Right ventricle myocardium superior (tissue), 1 donor: ENCODE measurements at regions of chr14 and their contacts with region 1.

Region 1: DNA sequence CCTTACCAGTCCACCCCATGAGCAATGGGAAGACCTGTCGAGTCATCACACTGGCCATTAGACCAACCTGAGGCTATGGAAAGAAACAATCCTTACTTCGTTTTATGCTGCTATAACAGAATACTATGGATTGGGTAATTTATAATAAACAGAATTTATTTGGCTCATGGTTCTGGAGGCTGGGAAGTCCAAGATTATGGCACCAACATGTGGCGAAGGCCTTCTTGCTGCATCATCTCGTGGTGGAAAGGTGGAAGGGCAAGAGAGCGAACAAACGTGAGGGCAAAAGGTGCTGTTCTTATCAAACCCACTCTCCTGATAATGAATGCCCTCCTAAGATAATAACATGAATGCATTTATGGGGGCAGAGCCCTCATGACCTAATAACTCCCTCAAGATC is 9.6 kb upstream of the SPTB start:
- DNase-seq: no peak
- ATAC-seq: no peak

Region 2: GRCh38 chr14:64126548-64126947 is 762.8 kb before region 1 on chr14:
- intact Hi-C with region 1: no loop called
- DNase-seq: no peak
- ATAC-seq: no peak

Region 3: GRCh38 chr14:64823305-64823861 is 66.0 kb before region 1 on chr14:
- intact Hi-C with region 1: loop called (anchors 5 kb)
- DNase-seq: peak; percentile 88
- ATAC-seq: peak; percentile 92

Region 4: GRCh38 chr14:64841121-64841651 is 48.2 kb before region 1 on chr14:
- intact Hi-C with region 1: no loop called
- DNase-seq: no peak
- ATAC-seq: peak; percentile 71

Region 5: DNA sequence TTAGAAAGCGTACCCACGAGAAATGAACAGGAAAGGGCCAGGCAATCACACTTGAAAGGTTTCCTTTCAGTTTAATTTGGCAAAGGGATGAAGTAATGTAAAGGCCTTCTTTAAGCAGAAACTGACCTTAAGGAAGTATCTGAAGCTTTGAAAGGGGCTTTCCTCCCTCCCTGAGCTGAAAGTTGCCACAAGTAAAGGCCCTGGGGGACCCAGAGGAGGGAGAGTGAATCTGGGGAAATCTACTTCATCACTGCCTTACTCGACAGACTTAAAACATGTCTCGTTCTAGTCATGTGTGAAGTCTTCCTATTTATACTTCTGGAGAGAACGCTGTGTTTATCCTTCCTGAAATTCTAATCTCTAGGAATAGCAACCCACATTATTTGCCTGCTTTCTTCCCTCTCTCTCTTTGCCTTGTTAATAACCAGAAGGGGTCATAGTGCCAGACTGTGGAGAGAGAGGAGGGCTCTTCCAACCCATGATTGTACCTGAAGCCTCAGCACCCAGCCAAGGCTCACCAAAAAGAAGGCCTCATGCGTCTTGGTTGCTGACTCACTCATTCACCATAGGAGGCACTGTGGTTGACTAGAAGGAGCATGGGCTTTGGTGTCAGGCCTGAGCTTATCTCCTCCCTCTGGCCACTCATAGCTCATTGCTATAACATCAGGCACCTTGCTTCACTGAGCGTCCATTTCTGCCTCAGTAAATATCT is 63.4 kb after region 1 on chr14:
- intact Hi-C with region 1: no loop called
- DNase-seq: no peak
- ATAC-seq: no peak

Region 6: GRCh38 chr14:65102441-65103149 is 213.2 kb after region 1 on chr14 and contains the start of gene MAX:
- intact Hi-C with region 1: no loop called
- DNase-seq: peak; percentile 99
- ATAC-seq: peak; percentile 97
- total RNA-seq, gene MAX: 85.2 TPM